MCF 10A (cell line): ENCODE measurements at regions of chr1 and their contacts with region 1.

Region 1: GRCh38 chr1:51192213-51192843 is 43.7 kb upstream of the RNF11 start:
- DNase-seq: peak; percentile 79
- H3K4me3 Mint-ChIP-seq: no peak overlapping the region
- H3K27ac Mint-ChIP-seq: no peak overlapping the region
- H3K4me1 Mint-ChIP-seq: no peaks in the 10 kb centered on the region
- H3K27me3 Mint-ChIP-seq: no peaks in the 10 kb centered on the region
- CTCF ChIP-seq: peak; percentile 68

Region 2: DNA sequence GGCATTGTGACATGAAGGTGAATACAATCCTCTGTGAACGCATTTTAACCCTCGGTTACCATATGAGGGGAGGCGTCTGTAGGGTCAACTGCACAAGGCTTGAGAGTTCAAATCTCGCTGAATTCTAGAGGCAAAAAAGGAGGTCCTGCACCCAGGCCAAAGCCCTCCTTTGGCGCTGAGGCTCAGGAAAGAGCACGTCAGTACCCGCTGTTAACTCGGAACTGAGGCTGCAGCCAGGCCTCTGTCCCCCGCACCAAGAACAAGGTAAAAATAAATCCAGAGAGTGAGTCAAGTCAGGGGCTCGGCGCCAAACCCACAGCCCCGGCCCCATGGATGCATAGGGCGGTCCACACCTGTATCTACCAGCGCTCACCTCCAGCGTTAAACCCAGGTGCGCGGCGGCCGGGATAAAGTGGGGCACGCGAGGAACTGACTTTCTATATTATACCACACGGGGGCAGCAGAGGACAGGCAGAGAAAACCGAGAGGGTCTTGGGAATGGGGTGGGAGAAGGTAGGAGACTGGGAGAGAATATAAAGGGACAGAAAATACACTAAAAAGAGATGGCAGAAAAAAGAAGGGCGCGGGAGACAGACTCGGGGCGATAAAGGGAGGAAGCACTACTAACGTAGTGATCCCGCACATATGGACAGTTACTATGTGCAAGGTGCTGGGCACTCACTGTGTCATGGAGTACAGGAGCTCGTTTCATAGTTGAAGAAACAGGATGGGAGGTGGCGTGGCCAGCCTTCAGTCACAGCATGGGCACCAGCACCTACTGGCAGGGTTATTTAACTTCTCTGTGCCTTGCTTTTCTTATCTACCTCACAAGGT is 823.9 kb before region 1 on chr1:
- CTCF ChIA-PET with region 1: interaction called, 3 read pairs
- POLR2A ChIA-PET with region 1: no interaction called
- intact Hi-C with region 1: loop called (anchors 2 kb)
- DNase-seq: peak; percentile 52
- H3K4me3 Mint-ChIP-seq: no peak overlapping the region
- H3K27ac Mint-ChIP-seq: no peak overlapping the region
- H3K4me1 Mint-ChIP-seq: no peaks in the 10 kb centered on the region
- H3K27me3 Mint-ChIP-seq: peaks cover 64% of the 10 kb centered on the region
- CTCF ChIP-seq: peak; percentile 97

Region 3: DNA sequence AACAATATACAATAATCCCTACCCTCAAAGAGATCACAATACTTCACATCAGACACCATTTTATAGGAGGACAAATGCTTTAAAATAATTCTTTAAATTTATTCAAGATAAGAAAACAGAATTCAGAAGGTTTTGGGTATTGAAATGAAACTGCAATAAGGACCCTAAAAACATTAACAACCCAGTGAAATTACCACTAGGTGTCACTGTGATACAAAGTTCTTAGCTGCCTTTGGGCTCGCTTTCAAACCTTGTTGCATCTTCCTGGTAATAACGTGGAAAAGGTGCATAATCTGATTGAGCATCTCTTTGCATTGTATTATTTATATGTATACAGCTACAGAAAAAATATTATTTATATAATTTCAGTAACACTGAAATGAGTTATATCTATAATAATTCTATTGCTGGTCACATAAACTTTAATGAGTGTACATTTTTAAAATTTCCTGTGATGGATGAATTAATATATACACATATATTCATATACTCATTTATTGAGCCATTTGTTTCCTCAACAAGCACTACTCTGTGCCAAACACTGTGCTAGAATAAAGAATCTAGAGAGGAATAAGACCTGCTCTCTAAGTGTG is 417.5 kb before region 1 on chr1:
- CTCF ChIA-PET with region 1: interaction called, 70 read pairs
- POLR2A ChIA-PET with region 1: no interaction called
- intact Hi-C with region 1: loop called (anchors 2 kb)
- DNase-seq: peak; percentile 74
- H3K4me3 Mint-ChIP-seq: no peak overlapping the region
- H3K27ac Mint-ChIP-seq: no peak overlapping the region
- H3K4me1 Mint-ChIP-seq: no peaks in the 10 kb centered on the region
- H3K27me3 Mint-ChIP-seq: no peaks in the 10 kb centered on the region
- CTCF ChIP-seq: peak; percentile 64

Region 4: DNA sequence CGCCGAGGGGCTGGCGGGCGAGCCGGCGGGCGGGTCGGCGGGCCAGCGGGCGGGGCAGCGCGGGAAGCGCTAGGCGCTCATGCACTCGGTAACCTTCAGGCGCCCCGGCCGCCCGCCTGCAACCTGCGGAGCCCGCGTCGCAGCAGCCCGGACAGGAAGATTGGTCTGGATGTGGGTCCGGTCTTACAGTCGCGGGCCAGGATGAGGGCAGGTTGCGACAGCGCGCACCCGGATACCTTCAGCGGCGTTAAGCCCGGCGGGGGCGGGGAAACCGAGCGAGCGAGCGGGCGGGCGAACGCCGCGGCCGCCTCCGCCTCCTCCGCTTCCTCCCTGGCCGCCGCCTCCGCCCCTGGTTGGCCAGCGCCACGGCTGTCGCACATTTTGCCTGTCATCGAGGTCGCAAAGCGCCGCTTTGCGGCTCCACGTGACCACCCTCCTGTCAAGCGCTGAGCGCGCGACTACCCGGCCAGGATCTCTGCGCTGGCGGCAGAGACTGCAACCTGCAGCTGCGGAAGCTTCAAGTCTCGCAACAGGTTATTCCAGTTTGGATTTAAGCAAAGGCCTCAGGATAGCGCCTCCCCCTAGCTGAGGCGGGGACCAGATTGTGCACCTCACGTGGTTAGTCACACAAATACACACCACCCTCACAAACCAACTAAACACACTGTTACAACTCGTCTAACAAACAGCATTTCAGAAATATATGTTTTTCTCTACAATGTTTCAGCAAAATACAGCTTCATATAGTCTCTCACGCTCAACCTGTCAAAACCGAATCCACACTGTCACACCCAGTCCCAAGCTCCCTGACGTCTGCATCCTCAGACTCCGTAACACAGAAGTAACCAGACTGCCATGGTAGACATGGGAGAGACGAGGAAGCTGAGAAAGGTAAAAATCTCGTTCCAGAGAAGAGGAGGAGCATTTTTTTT is 232.1 kb before region 1 on chr1 and contains the start of gene FAF1:
- CTCF ChIA-PET with region 1: interaction called, 14 read pairs
- POLR2A ChIA-PET with region 1: interaction called, 3 read pairs
- intact Hi-C with region 1: loop called (anchors 10 kb)
- DNase-seq: peak; percentile 96
- H3K4me3 Mint-ChIP-seq: peak within 1 kb of the TSS; percentile 76
- H3K27ac Mint-ChIP-seq: peak within 1 kb of the TSS; percentile 1
- H3K4me1 Mint-ChIP-seq: peaks cover 11% of the 10 kb centered on the region
- H3K27me3 Mint-ChIP-seq: no peaks in the 10 kb centered on the region
- CTCF ChIP-seq: no peak
- total RNA-seq, gene FAF1: 74.4 and 93.2 TPM in 2 replicates

Region 5: GRCh38 chr1:51088488-51088887 is 103.8 kb before region 1 on chr1:
- CTCF ChIA-PET with region 1: interaction called, 38 read pairs
- POLR2A ChIA-PET with region 1: no interaction called
- intact Hi-C with region 1: loop called (anchors 1 kb)
- DNase-seq: peak; percentile 14
- H3K4me3 Mint-ChIP-seq: no peak overlapping the region
- H3K27ac Mint-ChIP-seq: no peak overlapping the region
- H3K4me1 Mint-ChIP-seq: peaks cover 15% of the 10 kb centered on the region
- H3K27me3 Mint-ChIP-seq: peaks cover 20% of the 10 kb centered on the region
- CTCF ChIP-seq: peak; percentile 30

Region 6: GRCh38 chr1:51203121-51203873 is 11.0 kb after region 1 on chr1:
- CTCF ChIA-PET with region 1: interaction called, 24 read pairs
- POLR2A ChIA-PET with region 1: no interaction called
- intact Hi-C with region 1: no loop called
- DNase-seq: no peak
- H3K4me3 Mint-ChIP-seq: no peak overlapping the region
- H3K27ac Mint-ChIP-seq: no peak overlapping the region
- H3K4me1 Mint-ChIP-seq: no peaks in the 10 kb centered on the region
- H3K27me3 Mint-ChIP-seq: no peaks in the 10 kb centered on the region
- CTCF ChIP-seq: no peak

Region 7: DNA sequence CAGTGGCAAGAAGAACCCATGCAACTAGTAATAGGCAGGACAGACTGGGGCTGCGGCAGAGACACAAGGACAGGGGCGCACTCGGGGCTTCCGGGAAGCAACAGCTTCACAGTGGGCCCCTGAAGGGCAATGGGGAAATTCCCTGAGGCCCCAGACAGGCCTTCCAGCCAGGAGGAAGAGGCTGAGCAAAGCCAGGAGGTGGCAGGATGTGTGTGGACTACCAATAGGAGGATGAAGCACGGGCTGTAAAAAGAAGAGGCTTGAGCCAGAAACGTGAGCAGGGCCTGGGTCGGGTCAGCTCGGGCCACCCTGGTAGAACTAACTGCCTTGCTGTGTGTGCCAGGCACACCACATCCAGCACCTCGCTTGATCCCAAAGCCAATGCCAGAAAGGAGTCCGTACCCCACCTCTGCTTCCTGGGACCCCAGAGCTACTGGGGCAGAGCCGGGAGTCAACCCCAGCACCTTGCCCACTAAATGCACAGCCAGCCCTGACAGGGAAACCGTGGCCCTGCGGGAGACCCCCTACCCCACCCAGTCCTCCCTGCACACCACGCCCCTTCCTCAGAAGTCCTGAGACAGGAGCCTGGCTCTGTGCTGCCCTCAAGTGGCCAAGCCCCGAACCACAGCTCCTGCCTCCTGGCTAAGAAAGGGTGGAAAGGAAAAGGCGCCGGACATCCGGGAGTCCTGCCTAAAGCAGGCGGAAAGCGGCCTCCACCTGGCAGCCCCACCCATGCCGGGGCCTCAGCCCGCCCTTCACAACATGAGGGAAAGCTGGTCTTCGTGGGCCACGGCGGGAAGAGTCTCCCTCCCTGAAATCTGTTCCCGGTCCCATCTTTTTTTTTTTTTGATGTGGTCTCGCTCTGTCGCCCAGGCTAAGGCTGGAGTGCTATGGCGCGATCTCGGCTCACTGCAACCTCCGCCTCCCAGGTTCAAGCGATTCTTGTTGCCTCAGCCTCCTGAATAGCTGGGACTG is 104.3 kb after region 1 on chr1:
- CTCF ChIA-PET with region 1: interaction called, 69 read pairs
- POLR2A ChIA-PET with region 1: no interaction called
- intact Hi-C with region 1: loop called (anchors 1 kb)
- DNase-seq: peak; percentile 83
- H3K4me3 Mint-ChIP-seq: peak overlapping the region; percentile 41
- H3K27ac Mint-ChIP-seq: no peak overlapping the region
- H3K4me1 Mint-ChIP-seq: peaks cover 13% of the 10 kb centered on the region
- H3K27me3 Mint-ChIP-seq: no peaks in the 10 kb centered on the region
- CTCF ChIP-seq: peak; percentile 98